ENCODE measurements at regions of chr11 and their contacts with region 1.

Region 1: DNA sequence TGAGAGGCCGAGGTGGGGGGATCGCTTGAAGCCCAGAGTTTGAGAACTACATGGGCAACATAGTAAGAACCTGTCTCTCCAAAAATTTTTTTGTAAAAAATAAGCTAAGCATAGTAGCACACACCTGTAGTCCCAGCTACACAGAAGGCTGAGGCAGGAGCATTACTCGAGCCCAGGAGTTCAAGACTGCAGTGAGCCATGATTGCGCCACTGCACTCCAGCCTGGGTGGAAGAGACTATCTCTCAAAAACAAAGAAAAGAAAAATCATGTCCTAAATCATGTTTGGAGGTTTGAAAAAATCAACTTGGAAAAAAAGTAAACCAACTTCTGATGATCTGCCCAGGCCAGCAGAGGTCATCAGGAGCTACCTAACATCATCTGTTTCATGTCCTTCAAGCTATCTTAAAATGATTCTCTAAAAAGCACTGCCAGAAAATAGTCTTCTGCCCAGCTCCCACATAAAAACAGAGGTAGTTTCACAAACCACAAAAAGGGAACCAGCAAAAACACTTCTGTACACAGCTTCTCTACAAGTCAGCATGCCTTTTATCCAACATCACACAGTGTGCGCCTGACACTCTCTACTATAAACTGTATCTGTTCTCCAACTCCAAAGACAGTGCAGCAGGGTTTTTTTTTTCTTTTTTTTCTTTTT is 165.0 kb downstream of the SOX6 start:
- DNase-seq: no peak
- ATAC-seq: peak; percentile 35

Region 2: DNA sequence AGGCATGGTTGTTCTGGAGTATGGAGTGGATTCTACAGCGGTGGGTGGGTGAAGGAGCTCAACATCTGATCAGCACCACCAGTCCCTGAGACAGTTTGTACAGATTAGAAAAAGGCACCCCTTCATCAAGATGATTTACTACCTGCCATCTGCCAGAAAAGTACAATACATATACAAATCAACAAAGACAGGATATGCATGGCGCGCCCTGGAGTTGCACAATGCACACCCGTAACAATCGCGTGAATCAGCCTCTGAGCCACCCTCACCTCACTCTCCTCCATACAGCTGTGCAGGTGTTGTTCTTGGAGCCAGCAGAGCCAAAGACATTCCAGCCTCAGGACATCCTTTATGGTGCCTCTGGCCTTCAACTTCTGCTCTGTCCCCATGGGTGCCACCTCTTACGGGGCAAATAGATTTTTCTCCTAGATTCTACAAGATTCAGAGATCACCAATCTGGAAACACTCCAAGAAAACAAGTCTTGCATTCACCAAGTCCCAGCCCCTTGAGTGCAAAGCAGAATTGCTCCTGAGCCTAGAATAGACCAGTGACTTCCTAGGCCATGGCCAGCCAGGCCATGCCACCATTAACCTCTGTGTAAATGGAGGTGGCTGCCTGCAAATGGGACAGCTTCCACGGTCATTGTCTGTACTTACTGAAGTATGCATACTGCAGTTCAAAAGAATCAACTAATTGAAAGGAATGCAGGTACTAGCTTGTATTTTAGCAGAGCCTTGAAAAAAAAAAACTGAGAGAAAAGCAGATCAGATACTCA is 325.9 kb before region 1 on chr11:
- intact Hi-C with region 1: no loop called
- DNase-seq: no peak
- ATAC-seq: no peak

Region 3: GRCh38 chr11:16293204-16293681 is 101.9 kb after region 1 on chr11:
- intact Hi-C with region 1: no loop called
- DNase-seq: no peak
- ATAC-seq: peak; percentile 89

Region 4: DNA sequence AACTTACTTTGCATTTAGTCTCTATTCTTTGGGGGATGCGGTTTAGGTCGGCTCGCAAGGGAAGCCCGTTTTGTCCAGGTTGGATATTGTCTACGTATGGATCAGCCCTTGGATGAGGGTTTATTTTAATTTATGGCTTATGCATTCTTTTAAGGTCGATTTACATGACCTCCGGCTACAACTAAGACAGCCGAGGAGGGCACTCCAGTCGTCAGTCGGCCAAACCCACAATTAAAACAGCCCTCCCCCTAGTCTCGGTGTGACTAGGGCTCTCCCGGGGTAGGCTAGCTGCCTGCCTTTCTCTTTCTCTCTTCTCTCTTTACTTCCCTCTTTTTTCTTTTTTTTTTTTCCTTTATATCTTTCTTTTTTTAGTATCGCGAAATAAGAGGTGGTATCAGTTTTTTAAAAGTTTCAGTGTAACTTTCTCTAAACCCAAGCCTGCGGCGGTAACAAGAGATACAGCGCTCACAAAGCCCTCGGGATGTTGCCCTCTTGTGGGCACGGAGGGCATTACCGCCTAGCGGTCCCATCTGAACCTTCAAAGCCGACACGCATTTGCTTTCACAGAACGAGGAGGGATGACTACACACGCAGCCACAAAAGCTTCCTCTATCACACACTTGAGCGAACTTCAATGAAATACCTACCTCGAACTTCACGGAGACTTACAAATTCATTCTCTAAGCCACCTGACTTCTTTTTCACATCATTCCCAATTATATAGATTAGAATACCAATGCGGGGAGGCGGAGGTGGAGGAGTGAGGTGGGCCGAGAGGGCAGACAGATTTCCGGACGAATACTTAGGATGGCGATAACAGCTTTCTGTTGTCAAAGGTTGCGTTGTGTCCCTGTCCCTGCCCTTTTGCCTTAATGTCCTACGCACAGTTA is 414.8 kb after region 1 on chr11:
- intact Hi-C with region 1: loop called (anchors 5 kb)
- DNase-seq: peak; percentile 94
- ATAC-seq: peak; percentile 66